Right ventricle myocardium superior (tissue), 1 donor: ENCODE measurements at regions of chr10 and their contacts with region 1.

Region 1: DNA sequence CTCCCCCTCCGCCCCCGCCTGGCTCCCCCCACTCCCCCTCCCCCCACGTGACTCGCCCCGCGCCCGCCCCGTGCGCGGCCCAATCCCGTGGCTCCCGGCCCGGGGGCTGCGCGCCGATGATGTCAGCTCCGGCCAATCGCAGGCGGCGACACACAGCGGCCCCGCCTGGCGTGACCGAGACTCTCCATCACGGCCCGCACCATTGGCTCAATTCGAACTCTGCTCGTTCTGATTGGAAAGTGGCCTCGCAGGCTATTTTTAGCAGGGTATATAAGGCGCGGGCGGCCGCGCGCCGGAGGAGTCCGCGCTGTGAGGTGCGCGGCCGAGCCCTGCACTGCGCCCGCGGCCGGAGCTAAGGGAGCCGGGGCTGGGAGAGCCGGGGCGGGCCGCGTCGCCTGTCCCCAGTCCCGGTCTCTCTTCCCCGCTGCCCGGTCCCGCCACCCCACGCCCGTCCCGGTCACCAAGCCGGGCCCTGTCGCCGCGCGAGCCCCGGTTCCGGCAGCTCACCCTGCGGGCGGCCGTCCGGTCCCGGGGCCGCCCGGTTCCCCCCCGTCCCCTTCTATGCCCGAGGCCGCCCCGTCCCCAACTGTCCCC is 345 bp upstream of the KLF6 start:
- DNase-seq: peak; percentile 100
- ATAC-seq: peak; percentile 80

Region 2: GRCh38 chr10:3398825-3399646 is 386.3 kb before region 1 on chr10:
- intact Hi-C with region 1: no loop called
- DNase-seq: no peak
- ATAC-seq: peak; percentile 63

Region 3: DNA sequence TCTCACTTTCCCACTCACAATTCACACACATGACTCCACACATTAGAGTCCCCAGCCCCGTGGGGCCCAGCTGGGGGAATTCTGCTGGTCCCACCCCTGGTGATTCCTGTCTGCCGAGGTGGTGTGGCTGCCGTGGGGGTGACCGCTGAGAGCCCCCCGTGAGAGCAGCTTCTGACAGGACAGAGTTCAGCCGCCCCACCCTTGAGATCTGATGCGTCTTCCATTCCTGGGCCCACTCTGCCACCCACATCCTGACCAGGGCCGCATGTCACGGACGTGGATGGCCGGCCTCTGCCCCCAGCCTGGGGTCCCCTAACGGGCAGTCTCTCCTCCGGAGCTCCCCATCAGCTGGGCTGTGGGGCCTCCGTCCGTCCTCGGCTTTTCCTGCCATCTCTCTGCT is 372.7 kb before region 1 on chr10:
- intact Hi-C with region 1: no loop called
- DNase-seq: no peak
- ATAC-seq: no peak

Region 4: GRCh38 chr10:3911713-3912442 is 126.5 kb after region 1 on chr10:
- intact Hi-C with region 1: loop called (anchors 10 kb)
- DNase-seq: no peak
- ATAC-seq: peak; percentile 85

Region 5: DNA sequence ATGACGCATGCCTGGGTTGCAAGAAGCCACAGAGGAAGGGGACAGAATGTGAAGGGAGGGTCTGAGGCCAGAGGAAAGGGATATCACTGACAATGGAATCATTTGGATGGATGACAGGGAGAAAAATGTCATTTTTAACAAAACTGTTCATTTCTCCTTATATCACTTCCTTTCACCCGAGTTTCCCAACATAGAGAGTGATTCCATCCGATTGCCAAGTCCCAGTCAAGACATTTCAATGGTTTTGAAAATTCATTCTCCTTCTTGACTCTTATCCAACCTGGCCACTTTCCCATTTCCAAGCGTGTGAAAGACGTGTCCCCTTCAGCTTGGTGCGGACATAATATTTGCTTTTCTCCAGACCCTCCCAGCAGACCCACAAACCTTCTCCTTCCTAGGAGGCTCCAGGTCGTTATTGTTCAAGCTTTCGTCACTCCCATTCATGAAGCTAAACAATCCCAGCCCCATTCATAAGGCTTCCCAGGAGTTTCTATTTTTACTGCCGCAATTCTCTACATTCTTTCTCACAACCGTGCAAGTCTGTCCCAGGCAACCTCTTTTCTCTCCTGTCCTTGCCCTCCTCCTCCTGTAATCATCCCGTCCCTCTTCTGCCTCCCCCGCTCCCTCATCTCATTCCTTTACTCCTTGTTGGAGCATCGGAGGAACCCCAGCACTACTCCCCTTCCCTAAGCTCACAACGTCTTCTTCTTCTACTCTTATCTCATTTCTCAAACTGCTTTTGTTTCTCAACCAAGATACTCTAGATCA is 301.0 kb after region 1 on chr10:
- intact Hi-C with region 1: loop called (anchors 5 kb)
- DNase-seq: no peak
- ATAC-seq: peak; percentile 30

Region 6: GRCh38 chr10:4663162-4663904 is 878.0 kb after region 1 on chr10:
- intact Hi-C with region 1: loop called (anchors 10 kb)
- DNase-seq: no peak
- ATAC-seq: peak; percentile 89